Stomach (tissue), 19 donors: ENCODE measurements at regions of chr5 and their contacts with region 1.

Region 1: DNA sequence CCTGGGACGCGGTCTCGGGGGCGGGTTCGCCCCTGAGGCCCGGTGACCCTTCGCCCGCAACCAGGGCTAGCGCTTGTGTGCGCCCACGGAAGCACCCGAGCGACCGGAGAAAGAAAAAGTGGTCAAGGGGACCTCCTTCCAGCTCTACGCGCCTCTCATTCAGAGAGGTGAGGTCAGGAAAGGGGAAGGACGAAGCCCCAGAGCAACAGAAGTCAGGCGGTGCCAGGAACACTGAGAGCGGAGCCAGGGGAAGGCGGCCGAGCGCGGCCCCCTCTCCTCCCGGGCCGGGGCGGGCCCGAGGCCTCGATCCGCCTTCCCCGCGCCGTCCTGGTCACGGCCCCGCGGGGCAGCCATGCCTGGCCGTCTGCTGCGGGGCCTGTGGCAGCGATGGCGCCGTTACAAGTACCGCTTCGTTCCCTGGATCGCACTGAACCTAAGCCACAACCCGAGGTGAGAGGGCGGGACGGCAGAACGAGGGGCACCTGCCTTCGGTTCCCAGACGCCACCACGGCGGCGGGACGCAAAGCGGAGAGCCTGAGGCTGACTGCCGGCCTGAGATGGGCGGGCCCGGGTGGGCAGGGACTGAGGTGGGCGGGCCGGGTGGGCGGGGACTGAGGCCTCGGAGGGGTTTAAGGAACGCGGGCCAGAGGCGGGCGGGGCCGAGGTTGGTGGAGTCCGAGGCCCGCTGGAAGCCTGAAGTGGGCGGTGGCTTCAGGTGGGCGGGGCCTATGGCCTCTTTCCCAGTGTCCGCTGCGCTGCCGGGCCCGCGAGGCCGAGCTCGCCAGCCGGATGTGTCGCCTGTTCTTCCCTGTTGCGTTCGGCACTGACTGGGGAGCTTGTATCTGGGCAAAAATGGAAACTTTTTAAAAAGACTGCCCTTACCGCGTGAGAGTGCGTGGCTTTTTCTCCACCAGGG is at the start of gene SETD9:
- DNase-seq: peak; percentile 99
- H3K4me3 ChIP-seq: peak within 1 kb of the TSS; percentile 51 to 72 (median 61)
- H3K27ac ChIP-seq: peak within 1 kb of the TSS; percentile 90 to 97 (median 93)
- H3K4me1 ChIP-seq: peaks cover 0 to 17% (median 9%) of the 10 kb centered on the region in 4 donors
- H3K27me3 ChIP-seq: no peaks in the 10 kb centered on the region
- CTCF ChIP-seq: no peak
- EP300 ChIP-seq: no peak
- POLR2A ChIP-seq: peak in 2 of 4 donors; percentile 10 to 15
- total RNA-seq, gene SETD9: 1.0 to 46.7 (median 9.4) TPM in 4 of 5 donors, not detected in the other

Region 2: DNA sequence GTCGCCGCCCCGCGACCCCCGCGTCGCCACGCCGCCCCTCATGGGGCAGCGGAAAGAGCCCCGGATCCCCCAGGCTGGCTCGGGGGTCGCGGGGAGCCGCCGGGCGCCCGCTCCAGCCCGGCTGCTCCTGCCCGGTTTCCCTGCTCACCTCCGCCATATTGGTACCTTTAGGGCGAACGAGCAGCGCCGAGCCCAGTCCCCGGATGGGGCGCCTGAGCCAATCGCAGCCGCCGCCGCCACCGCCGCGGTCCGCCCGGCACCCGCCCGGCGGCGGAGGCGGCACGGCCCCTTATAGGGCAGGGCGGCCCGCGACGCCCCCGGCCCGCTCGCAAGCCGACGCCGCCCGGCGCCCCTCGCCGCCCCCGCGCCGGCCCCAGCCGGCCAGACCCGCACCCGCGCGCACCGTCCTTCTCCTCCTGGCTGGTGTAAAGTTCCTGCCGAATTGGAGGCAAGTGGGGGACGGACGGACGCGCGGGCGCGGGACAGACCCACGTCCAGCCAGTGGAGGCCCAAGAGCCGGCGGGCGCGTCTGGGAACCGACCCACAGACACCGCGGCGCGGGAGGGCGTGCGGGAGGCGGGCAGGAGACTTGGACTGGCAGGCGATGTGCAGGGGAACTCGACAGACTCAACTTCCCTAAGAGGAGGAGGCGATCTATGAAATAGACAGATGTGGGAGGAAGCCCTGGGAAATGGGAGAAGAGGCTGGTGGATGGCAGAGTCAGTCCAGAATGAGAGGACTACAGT is 42.6 kb after region 1 on chr5 and contains the start of gene MIER3:
- intact Hi-C with region 1: loop called (anchors 10 kb)
- DNase-seq: peak; percentile 81 to 94
- H3K4me3 ChIP-seq: peak within 1 kb of the TSS; percentile 91 to 100 (median 96)
- H3K27ac ChIP-seq: peak within 1 kb of the TSS; percentile 79 to 95 (median 93)
- H3K4me1 ChIP-seq: peaks cover 0 to 35% (median 23%) of the 10 kb centered on the region in 4 donors
- H3K27me3 ChIP-seq: peaks cover 0 to 9% (median 0%) of the 10 kb centered on the region in 3 donors
- CTCF ChIP-seq: no peak
- EP300 ChIP-seq: no peak
- POLR2A ChIP-seq: no peak
- total RNA-seq, gene MIER3: 6.8 to 30.8 (median 16.8) TPM

Region 3: DNA sequence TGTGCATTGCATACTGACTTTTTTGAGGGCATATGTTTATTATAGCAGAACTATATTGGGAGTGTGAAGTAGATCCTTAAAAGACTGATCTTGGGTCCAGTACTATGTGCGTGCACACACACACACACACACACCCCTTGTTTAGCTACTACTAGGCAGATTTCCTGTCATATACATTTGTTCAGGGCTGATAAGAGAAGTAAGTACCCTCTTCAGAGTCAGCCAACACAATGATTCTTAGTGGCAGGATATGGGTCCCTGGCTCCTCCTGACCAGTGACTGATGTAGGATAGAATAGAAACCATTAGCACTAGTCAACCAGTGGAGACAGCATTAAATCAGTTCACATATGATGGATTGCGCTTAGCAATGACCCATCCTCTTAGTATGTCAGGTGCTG is 118.6 kb after region 1 on chr5:
- intact Hi-C with region 1: no loop called
- DNase-seq: no peak
- H3K4me3 ChIP-seq: no peak overlapping the region
- H3K27ac ChIP-seq: no peak overlapping the region
- H3K4me1 ChIP-seq: no peaks in the 10 kb centered on the region
- H3K27me3 ChIP-seq: no peaks in the 10 kb centered on the region
- CTCF ChIP-seq: no peak
- EP300 ChIP-seq: no peak
- POLR2A ChIP-seq: no peak

Region 4: GRCh38 chr5:57209351-57210040 is 299.9 kb after region 1 on chr5:
- intact Hi-C with region 1: loop called (anchors 10 kb)
- DNase-seq: no peak
- H3K4me3 ChIP-seq: no peak overlapping the region
- H3K27ac ChIP-seq: no peak overlapping the region
- H3K4me1 ChIP-seq: peaks cover 9 to 72% (median 38%) of the 10 kb centered on the region in 4 donors
- H3K27me3 ChIP-seq: no peaks in the 10 kb centered on the region
- CTCF ChIP-seq: no peak
- EP300 ChIP-seq: no peak
- POLR2A ChIP-seq: no peak